ENCODE measurements at regions of chr7 and their contacts with region 1.

Region 1: DNA sequence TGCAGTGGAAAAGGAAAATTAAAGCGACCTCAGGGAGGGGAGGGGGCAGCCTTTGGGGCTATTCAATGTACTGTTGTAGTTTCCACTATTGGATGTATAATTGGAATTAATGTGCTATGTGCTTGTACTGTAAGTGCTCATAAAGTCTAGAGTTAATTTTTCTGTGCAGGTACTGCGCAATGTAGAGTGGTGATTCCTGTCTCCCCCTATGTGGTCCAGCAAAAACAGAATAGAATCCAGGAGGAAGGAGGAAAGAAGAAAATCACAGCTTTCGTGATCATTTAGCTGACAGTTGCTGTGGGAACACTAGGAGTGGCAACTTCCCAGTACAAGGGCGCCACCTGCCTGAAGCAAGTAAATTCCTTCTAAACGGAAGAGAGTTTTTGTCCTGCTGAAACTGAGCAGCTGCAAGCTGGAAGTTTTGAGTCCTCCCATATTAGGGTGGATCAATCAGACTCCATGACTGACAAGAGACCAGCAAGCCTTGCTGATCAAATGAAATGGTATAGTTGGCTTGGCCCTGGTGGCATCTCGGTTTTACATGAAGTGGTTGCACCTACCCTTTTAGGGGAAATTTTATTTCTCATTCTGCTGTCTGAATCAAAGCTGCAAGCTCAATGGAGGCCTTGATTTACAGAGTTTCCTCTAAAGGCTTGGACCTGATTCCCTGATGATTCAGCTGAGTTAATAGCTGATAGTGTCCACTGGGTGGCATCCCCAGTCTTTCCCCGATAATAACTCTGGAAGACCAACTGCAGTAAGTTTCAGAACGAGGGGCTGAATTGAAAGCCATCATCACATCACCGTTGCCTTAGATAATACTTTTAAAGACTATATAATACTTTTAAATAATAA is 299.8 kb downstream of the HGF start:
- DNase-seq: peak; percentile 80
- H3K4me3 ChIP-seq: no peak overlapping the region
- H3K27ac ChIP-seq: no peak overlapping the region
- H3K4me1 ChIP-seq: no peaks in the 10 kb centered on the region
- H3K27me3 ChIP-seq: no peaks in the 10 kb centered on the region
- CTCF ChIP-seq: peak; percentile 78

Region 2: GRCh38 chr7:81789406-81790119 is 319.5 kb after region 1 on chr7:
- CTCF ChIA-PET with region 1: interaction called, 11 read pairs
- POLR2A ChIA-PET with region 1: no interaction called
- intact Hi-C with region 1: no loop called
- DNase-seq: no peak
- H3K4me3 ChIP-seq: no peak overlapping the region
- H3K27ac ChIP-seq: no peak overlapping the region
- H3K4me1 ChIP-seq: peaks cover 7% of the 10 kb centered on the region
- H3K27me3 ChIP-seq: no peaks in the 10 kb centered on the region
- CTCF ChIP-seq: no peak

Region 3: DNA sequence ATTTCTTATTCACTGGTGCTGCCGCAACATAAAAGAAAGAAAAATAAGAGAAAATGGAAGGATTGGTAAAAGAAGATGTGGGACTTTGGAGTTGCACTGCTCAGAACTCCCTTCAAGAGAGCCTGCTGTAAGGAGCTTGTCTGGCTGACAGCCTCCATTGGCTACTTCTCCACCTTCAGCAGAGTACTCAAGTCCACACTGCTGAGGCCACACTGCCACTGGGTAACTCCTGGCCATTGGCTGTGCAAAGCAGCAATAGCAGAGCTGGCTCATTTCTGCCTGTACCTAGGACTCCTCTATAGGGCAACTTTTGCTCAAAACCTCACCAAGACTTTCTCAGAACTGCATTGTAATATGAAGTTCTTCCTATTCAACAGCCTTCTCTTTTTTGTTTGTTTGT is 1731.3 kb after region 1 on chr7:
- CTCF ChIA-PET with region 1: no interaction called
- POLR2A ChIA-PET with region 1: no interaction called
- intact Hi-C with region 1: no loop called
- DNase-seq: no peak
- H3K4me3 ChIP-seq: no peak overlapping the region
- H3K27ac ChIP-seq: no peak overlapping the region
- H3K4me1 ChIP-seq: no peaks in the 10 kb centered on the region
- H3K27me3 ChIP-seq: no peaks in the 10 kb centered on the region
- CTCF ChIP-seq: no peak